MCF 10A (cell line): ENCODE measurements at regions of chr3 and their contacts with region 1.

Region 1: GRCh38 chr3:159884661-159885402 is 103.8 kb upstream of the IL12A start:
- DNase-seq: peak; percentile 46
- H3K4me3 Mint-ChIP-seq: no peak overlapping the region
- H3K27ac Mint-ChIP-seq: peak overlapping the region; percentile 31
- H3K4me1 Mint-ChIP-seq: peaks cover 26% of the 10 kb centered on the region
- H3K27me3 Mint-ChIP-seq: no peaks in the 10 kb centered on the region
- CTCF ChIP-seq: peak; percentile 65

Region 2: GRCh38 chr3:159616212-159616825 is 268.5 kb before region 1 on chr3:
- CTCF ChIA-PET with region 1: interaction called, 4 read pairs
- POLR2A ChIA-PET with region 1: no interaction called
- intact Hi-C with region 1: loop called (anchors 5 kb)
- DNase-seq: peak; percentile 67
- H3K4me3 Mint-ChIP-seq: no peak overlapping the region
- H3K27ac Mint-ChIP-seq: no peak overlapping the region
- H3K4me1 Mint-ChIP-seq: peaks cover 14% of the 10 kb centered on the region
- H3K27me3 Mint-ChIP-seq: no peaks in the 10 kb centered on the region
- CTCF ChIP-seq: peak; percentile 83

Region 3: GRCh38 chr3:159828542-159828943 is 56.3 kb before region 1 on chr3:
- CTCF ChIA-PET with region 1: interaction called, 168 read pairs
- POLR2A ChIA-PET with region 1: interaction called, 71 read pairs
- intact Hi-C with region 1: loop called (anchors 1 kb)
- DNase-seq: peak; percentile 71
- H3K4me3 Mint-ChIP-seq: no peak overlapping the region
- H3K27ac Mint-ChIP-seq: peak overlapping the region; percentile 84
- H3K4me1 Mint-ChIP-seq: peaks cover 40% of the 10 kb centered on the region
- H3K27me3 Mint-ChIP-seq: no peaks in the 10 kb centered on the region
- CTCF ChIP-seq: peak; percentile 38

Region 4: DNA sequence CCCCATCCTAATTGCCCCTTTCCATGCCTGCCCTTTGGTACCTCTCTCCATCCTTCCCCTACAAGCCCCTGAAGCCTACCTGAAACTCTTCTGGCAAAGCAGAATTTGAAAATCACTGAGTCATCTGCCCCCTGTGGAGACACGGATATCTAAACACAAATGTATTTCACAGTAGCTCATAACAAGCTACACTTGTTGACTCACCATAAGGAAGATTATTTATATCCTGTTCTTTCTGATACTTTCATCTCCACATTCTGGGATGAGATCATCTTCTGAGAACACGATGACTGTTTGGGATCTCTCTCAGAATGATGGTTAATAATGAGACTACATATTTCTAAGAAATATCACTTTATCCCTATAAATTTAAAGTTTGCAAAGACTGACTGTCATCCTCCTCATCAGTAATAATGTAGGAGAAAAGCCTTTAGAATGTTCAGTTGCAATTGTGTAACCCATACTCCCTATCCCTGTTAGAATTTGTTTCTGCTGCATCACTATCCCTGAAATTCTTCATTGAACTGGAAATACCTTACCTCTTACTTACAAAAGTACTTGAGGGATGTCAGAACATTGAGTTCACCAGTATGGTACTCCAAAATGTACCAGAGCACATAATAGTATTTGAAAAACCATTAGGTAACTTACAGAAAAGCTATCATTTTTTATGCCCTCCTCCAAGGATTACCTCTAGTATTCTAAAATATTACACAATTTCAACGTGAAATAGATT is 12.3 kb before region 1 on chr3:
- CTCF ChIA-PET with region 1: interaction called, 52 read pairs
- POLR2A ChIA-PET with region 1: interaction called, 18 read pairs
- intact Hi-C with region 1: no loop called
- DNase-seq: peak; percentile 89
- H3K4me3 Mint-ChIP-seq: no peak overlapping the region
- H3K27ac Mint-ChIP-seq: peak overlapping the region; percentile 84
- H3K4me1 Mint-ChIP-seq: peaks cover 22% of the 10 kb centered on the region
- H3K27me3 Mint-ChIP-seq: no peaks in the 10 kb centered on the region
- CTCF ChIP-seq: peak; percentile 12

Region 5: GRCh38 chr3:159929435-159930141 is 44.8 kb after region 1 on chr3:
- CTCF ChIA-PET with region 1: interaction called, 38 read pairs
- POLR2A ChIA-PET with region 1: interaction called, 3 read pairs
- intact Hi-C with region 1: no loop called
- DNase-seq: peak; percentile 64
- H3K4me3 Mint-ChIP-seq: peak overlapping the region; percentile 33
- H3K27ac Mint-ChIP-seq: peak overlapping the region; percentile 24
- H3K4me1 Mint-ChIP-seq: peaks cover 16% of the 10 kb centered on the region
- H3K27me3 Mint-ChIP-seq: no peaks in the 10 kb centered on the region
- CTCF ChIP-seq: peak; percentile 24

Region 6: DNA sequence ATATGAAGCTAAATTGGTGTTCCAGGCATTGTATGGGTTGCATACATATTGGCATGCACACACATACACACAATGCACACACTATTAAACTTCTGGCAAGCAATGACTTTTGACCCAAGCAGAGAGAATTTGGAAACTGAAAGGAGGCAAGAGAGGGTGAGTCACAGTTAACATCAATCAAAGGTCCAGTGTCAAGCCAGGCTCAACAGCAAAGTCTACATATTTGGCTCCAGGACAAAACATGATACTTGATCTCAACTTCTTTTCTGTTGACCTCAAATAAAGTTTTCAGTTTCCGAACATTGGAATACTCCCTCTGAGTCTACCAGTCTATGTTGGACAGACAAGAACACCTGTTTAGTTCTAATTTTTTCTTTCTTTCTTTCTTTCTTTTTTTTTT is 132.1 kb after region 1 on chr3:
- CTCF ChIA-PET with region 1: interaction called, 721 read pairs
- POLR2A ChIA-PET with region 1: no interaction called
- intact Hi-C with region 1: no loop called
- DNase-seq: peak; percentile 84
- H3K4me3 Mint-ChIP-seq: no peak overlapping the region
- H3K27ac Mint-ChIP-seq: no peak overlapping the region
- H3K4me1 Mint-ChIP-seq: peaks cover 5% of the 10 kb centered on the region
- H3K27me3 Mint-ChIP-seq: peaks cover 22% of the 10 kb centered on the region
- CTCF ChIP-seq: no peak

Region 7: GRCh38 chr3:160413613-160414248 is 528.9 kb after region 1 on chr3:
- CTCF ChIA-PET with region 1: interaction called, 16 read pairs
- POLR2A ChIA-PET with region 1: no interaction called
- intact Hi-C with region 1: no loop called
- DNase-seq: peak; percentile 79
- H3K4me3 Mint-ChIP-seq: no peak overlapping the region
- H3K27ac Mint-ChIP-seq: no peak overlapping the region
- H3K4me1 Mint-ChIP-seq: peaks cover 18% of the 10 kb centered on the region
- H3K27me3 Mint-ChIP-seq: no peaks in the 10 kb centered on the region
- CTCF ChIP-seq: peak; percentile 78